ENCODE measurements at regions of chr10 and their contacts with region 1.

Region 1: GRCh38 chr10:68550747-68551411 is 9.3 kb upstream of the TET1 start:
- DNase-seq: peak; percentile 82
- H3K4me3 Mint-ChIP-seq: no peak overlapping the region
- H3K27ac Mint-ChIP-seq: no peak overlapping the region
- H3K4me1 Mint-ChIP-seq: peaks cover 7% of the 10 kb centered on the region
- H3K27me3 Mint-ChIP-seq: no peaks in the 10 kb centered on the region
- CTCF ChIP-seq: peak; percentile 68

Region 2: GRCh38 chr10:68032113-68032512 is 518.8 kb before region 1 on chr10:
- CTCF ChIA-PET with region 1: no interaction called
- POLR2A ChIA-PET with region 1: no interaction called
- intact Hi-C with region 1: no loop called
- DNase-seq: no peak
- H3K4me3 Mint-ChIP-seq: no peak overlapping the region
- H3K27ac Mint-ChIP-seq: no peak overlapping the region
- H3K4me1 Mint-ChIP-seq: peaks cover 6% of the 10 kb centered on the region
- H3K27me3 Mint-ChIP-seq: no peaks in the 10 kb centered on the region
- CTCF ChIP-seq: no peak

Region 3: GRCh38 chr10:68560943-68561864 is 10.3 kb after region 1 on chr10:
- CTCF ChIA-PET with region 1: no interaction called
- POLR2A ChIA-PET with region 1: no interaction called
- intact Hi-C with region 1: no loop called
- DNase-seq: no peak
- H3K4me3 Mint-ChIP-seq: no peak overlapping the region
- H3K27ac Mint-ChIP-seq: no peak overlapping the region
- H3K4me1 Mint-ChIP-seq: peaks cover 5% of the 10 kb centered on the region
- H3K27me3 Mint-ChIP-seq: peaks cover 11% of the 10 kb centered on the region
- CTCF ChIP-seq: no peak

Region 4: GRCh38 chr10:68600041-68600778 is 49.3 kb after region 1 on chr10:
- CTCF ChIA-PET with region 1: interaction called, 5 read pairs
- POLR2A ChIA-PET with region 1: interaction called, 5 read pairs
- intact Hi-C with region 1: loop called (anchors 5 kb)
- DNase-seq: peak; percentile 73
- H3K4me3 Mint-ChIP-seq: peak overlapping the region; percentile 79
- H3K27ac Mint-ChIP-seq: peak overlapping the region; percentile 20
- H3K4me1 Mint-ChIP-seq: peaks cover 23% of the 10 kb centered on the region
- H3K27me3 Mint-ChIP-seq: no peaks in the 10 kb centered on the region
- CTCF ChIP-seq: no peak